ENCODE measurements at regions of chr20 and their contacts with region 1.

Region 1: GRCh38 chr20:43507150-43508080 is at the start of gene L3MBTL1:
- DNase-seq: no peak
- H3K4me3 ChIP-seq: peak within 1 kb of the TSS; percentile 52 to 58
- H3K27ac ChIP-seq: no peak within 1 kb of the TSS
- H3K4me1 ChIP-seq: peaks cover 0 to 16% (median 9%) of the 10 kb centered on the region in 4 donors
- H3K27me3 ChIP-seq: peaks cover 0 to 20% of the 10 kb centered on the region in 2 donors
- CTCF ChIP-seq: no peak

Region 2: GRCh38 chr20:43450841-43451799 is 56.3 kb before region 1 on chr20:
- intact Hi-C with region 1: loop called (anchors 5 kb)
- DNase-seq: no peak
- H3K4me3 ChIP-seq: no peak overlapping the region
- H3K27ac ChIP-seq: no peak overlapping the region
- H3K4me1 ChIP-seq: no peaks in the 10 kb centered on the region
- H3K27me3 ChIP-seq: peaks cover 0 to 30% of the 10 kb centered on the region in 2 donors
- CTCF ChIP-seq: no peak

Region 3: GRCh38 chr20:43463133-43463863 is 44.1 kb before region 1 on chr20:
- intact Hi-C with region 1: no loop called
- DNase-seq: no peak
- H3K4me3 ChIP-seq: no peak overlapping the region
- H3K27ac ChIP-seq: no peak overlapping the region
- H3K4me1 ChIP-seq: peaks cover 0 to 23% (median 15%) of the 10 kb centered on the region in 4 donors
- H3K27me3 ChIP-seq: no peaks in the 10 kb centered on the region
- CTCF ChIP-seq: no peak